Panc1 (cell line): ENCODE measurements at regions of chrX and their contacts with region 1.

Region 1: GRCh38 chrX:103711533-103712369 is 1.0 kb downstream of the TMEM31 start:
- DNase-seq: peak; percentile 22
- ATAC-seq: peak; percentile 73
- H3K4me3 ChIP-seq: no peak overlapping the region
- H3K27ac ChIP-seq: no peak overlapping the region
- H3K4me1 ChIP-seq: no peaks in the 10 kb centered on the region
- H3K27me3 ChIP-seq: no peaks in the 10 kb centered on the region
- CTCF ChIP-seq: peak; percentile 81

Region 2: GRCh38 chrX:103629318-103630170 is 82.2 kb before region 1 on chrX:
- CTCF ChIA-PET with region 1: no interaction called
- POLR2A ChIA-PET with region 1: no interaction called
- in situ Hi-C with region 1: no loop called
- intact Hi-C with region 1: no loop called
- DNase-seq: peak; percentile 58
- ATAC-seq: peak; percentile 89
- H3K4me3 ChIP-seq: peak overlapping the region; percentile 80 to 96
- H3K27ac ChIP-seq: peak overlapping the region; percentile 97
- H3K4me1 ChIP-seq: peaks cover 9% of the 10 kb centered on the region; the same call in 1 of the 2 replicates
- H3K27me3 ChIP-seq: no peaks in the 10 kb centered on the region
- CTCF ChIP-seq: peak; percentile 90

Region 3: GRCh38 chrX:103774070-103774642 is 62.4 kb after region 1 on chrX:
- CTCF ChIA-PET with region 1: no interaction called
- POLR2A ChIA-PET with region 1: no interaction called
- in situ Hi-C with region 1: no loop called
- intact Hi-C with region 1: loop called (anchors 10 kb)
- DNase-seq: no peak
- ATAC-seq: peak; percentile 83
- H3K4me3 ChIP-seq: no peak overlapping the region
- H3K27ac ChIP-seq: no peak overlapping the region
- H3K4me1 ChIP-seq: no peaks in the 10 kb centered on the region; the same call in none of the 2 replicates
- H3K27me3 ChIP-seq: peaks cover 14% of the 10 kb centered on the region
- CTCF ChIP-seq: peak; percentile 76

Region 4: GRCh38 chrX:103817502-103817901 is 105.8 kb after region 1 on chrX:
- CTCF ChIA-PET with region 1: no interaction called
- POLR2A ChIA-PET with region 1: no interaction called
- in situ Hi-C with region 1: no loop called
- intact Hi-C with region 1: loop called (anchors 5 kb)
- DNase-seq: peak; percentile 46
- ATAC-seq: peak; percentile 88
- H3K4me3 ChIP-seq: no peak overlapping the region
- H3K27ac ChIP-seq: no peak overlapping the region
- H3K4me1 ChIP-seq: no peaks in the 10 kb centered on the region
- H3K27me3 ChIP-seq: no peaks in the 10 kb centered on the region
- CTCF ChIP-seq: peak; percentile 70; the same call in 1 of the 2 replicates